ENCODE measurements at regions of chr14 and their contacts with region 1.

Region 1: GRCh38 chr14:94129111-94129757 is at the start of gene IFI27L2:
- DNase-seq: peak; percentile 95
- CTCF ChIP-seq: peak; percentile 2

Region 2: GRCh38 chr14:94115058-94115591 is 14.1 kb before region 1 on chr14:
- CTCF ChIA-PET with region 1: interaction called, 13 read pairs
- POLR2A ChIA-PET with region 1: no interaction called
- DNase-seq: no peak
- CTCF ChIP-seq: no peak

Region 3: DNA sequence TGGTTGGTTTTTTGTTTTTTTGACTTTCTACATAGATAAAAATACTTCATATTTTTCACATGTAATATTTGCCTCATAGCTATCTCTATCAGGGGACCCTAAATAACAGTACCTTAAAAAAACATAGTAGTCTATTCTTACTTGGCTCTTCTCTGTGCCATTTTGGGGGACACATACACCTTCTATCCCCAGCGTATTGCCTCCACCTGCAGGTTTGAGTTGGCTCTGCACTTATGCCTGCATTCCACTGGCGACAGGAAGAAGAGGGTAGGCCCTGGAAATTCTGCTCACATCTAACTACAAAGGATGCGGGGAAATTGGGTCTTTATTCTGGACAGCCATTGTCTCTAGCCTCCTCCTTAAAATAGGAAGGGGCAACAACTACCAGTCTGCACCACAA is 14.0 kb after region 1 on chr14:
- CTCF ChIA-PET with region 1: interaction called, 46 read pairs
- POLR2A ChIA-PET with region 1: no interaction called
- DNase-seq: no peak
- CTCF ChIP-seq: peak; percentile 26